Activated CD4-positive, alpha-beta T cell treated with anti-CD3 and anti-CD28 coated beads for 36 hours (primary cell): ENCODE measurements at regions of chr11 and their contacts with region 1.

Region 1: GRCh38 chr11:62880803-62881578 is at the start of gene SLC3A2:
- DNase-seq: peak; percentile 94
- ATAC-seq: peak; percentile 75
- H3K4me3 Mint-ChIP-seq: peak within 1 kb of the TSS; percentile 99
- H3K27ac Mint-ChIP-seq: peak within 1 kb of the TSS; percentile 100
- H3K4me1 Mint-ChIP-seq: peaks cover 44% of the 10 kb centered on the region
- H3K27me3 Mint-ChIP-seq: no peaks in the 10 kb centered on the region
- total RNA-seq, gene SLC3A2: 401 to 402 TPM

Region 2: GRCh38 chr11:61332797-61333549 is 1548.0 kb before region 1 on chr11 and contains the starts of genes DDB1 and TKFC:
- CTCF ChIA-PET with region 1: no interaction called
- POLR2A ChIA-PET with region 1: no interaction called
- intact Hi-C with region 1: no loop called
- DNase-seq: peak; percentile 99
- ATAC-seq: peak; percentile 94
- H3K4me3 Mint-ChIP-seq: peak within 1 kb of the TSS; percentile 97
- H3K27ac Mint-ChIP-seq: peak within 1 kb of the TSS; percentile 100
- H3K4me1 Mint-ChIP-seq: peaks cover 64% of the 10 kb centered on the region
- H3K27me3 Mint-ChIP-seq: no peaks in the 10 kb centered on the region
- total RNA-seq, gene DDB1: 258 to 268 TPM
- total RNA-seq, gene TKFC: 100 to 107 TPM

Region 3: GRCh38 chr11:62601394-62602140 is 279.4 kb before region 1 on chr11 and contains the start of gene MTA2:
- CTCF ChIA-PET with region 1: no interaction called
- POLR2A ChIA-PET with region 1: interaction called, 4 read pairs
- intact Hi-C with region 1: loop called in 1 of 2 experiments (anchors 1 kb)
- DNase-seq: peak; percentile 100
- ATAC-seq: peak; percentile 89
- H3K4me3 Mint-ChIP-seq: peak within 1 kb of the TSS; percentile 91
- H3K27ac Mint-ChIP-seq: peak within 1 kb of the TSS; percentile 96
- H3K4me1 Mint-ChIP-seq: peaks cover 51% of the 10 kb centered on the region
- H3K27me3 Mint-ChIP-seq: no peaks in the 10 kb centered on the region
- total RNA-seq, gene MTA2: 159 to 179 TPM

Region 4: DNA sequence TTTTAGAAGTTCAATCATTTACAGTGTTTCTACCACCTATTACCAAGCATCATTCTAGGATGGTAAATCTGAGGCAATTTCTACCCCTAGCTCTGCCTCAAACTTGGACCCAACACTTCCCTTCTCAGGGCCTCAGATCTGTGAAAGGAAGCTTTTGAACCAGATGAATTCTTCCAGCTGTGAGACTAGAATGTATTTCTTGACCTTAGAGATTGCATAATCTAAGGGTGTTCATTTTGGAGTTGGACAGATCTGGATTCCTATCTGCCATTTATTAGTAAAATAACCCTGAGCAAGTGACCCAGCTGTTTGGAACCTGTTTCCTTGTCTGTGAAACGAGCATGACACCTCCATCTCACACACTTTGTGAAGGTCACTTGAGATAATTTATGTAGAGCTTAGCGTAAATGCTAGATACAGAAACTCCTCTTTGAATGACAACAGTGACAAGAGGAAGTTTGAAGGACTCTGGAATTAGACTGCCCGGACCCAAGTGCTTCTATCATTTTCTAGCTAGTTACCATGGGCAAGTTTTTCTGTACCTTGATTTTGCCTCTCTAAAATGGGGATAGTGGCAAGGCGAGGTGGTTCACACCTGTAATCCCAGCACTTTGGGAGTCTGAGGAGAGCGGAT is 224.1 kb before region 1 on chr11:
- CTCF ChIA-PET with region 1: no interaction called
- POLR2A ChIA-PET with region 1: no interaction called
- intact Hi-C with region 1: no loop called
- DNase-seq: no peak
- ATAC-seq: no peak
- H3K4me3 Mint-ChIP-seq: no peak overlapping the region
- H3K27ac Mint-ChIP-seq: no peak overlapping the region
- H3K4me1 Mint-ChIP-seq: peaks cover 12% of the 10 kb centered on the region
- H3K27me3 Mint-ChIP-seq: no peaks in the 10 kb centered on the region

Region 5: GRCh38 chr11:62705880-62706849 is 174.8 kb before region 1 on chr11:
- CTCF ChIA-PET with region 1: no interaction called
- POLR2A ChIA-PET with region 1: no interaction called
- intact Hi-C with region 1: loop called in 1 of 2 experiments (anchors 1 kb)
- DNase-seq: peak; percentile 98
- ATAC-seq: peak; percentile 72
- H3K4me3 Mint-ChIP-seq: peak overlapping the region; percentile 82
- H3K27ac Mint-ChIP-seq: peak overlapping the region; percentile 51
- H3K4me1 Mint-ChIP-seq: peaks cover 46% of the 10 kb centered on the region
- H3K27me3 Mint-ChIP-seq: no peaks in the 10 kb centered on the region

Region 6: DNA sequence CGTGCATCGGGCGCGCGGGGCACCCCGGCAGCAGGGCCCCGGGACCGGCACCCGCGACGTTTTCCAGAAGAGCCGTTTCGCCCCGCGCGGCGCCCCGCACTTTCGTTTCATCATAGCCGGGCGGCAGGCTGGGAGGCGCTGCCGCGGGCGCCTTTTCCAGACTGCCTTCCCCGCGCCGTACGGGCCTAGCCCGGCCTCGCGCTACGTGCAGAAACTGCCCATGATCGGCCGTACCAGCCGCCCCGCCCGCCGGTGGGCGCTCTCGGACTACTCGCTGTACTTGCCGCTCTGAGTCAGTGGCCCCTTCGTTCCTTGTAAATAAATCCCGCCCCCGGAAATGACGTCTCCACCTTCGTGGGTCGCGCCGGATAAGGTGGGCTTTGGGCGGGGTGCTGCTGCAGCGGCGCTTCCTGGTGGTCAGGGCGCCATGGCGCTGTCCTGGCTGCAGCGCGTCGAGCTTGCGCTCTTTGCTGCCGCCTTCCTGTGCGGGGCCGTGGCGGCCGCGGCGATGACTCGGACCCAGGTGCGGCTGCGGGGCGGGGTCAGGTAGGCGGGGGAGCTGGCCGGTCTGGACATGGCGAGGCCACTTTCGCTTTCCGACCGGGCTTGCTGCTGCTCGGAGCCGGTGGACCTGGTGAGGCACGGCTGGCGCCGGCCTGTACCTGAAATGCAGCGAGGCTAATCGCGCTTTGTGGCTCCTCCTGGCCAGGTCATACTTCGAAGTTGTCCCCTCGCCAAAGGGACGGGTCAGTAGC is 93.8 kb before region 1 on chr11 and contains the start of gene TMEM179B:
- CTCF ChIA-PET with region 1: interaction called, 16 read pairs
- POLR2A ChIA-PET with region 1: interaction called, 7 read pairs
- intact Hi-C with region 1: loop called (anchors 1 kb)
- DNase-seq: peak; percentile 99
- ATAC-seq: peak; percentile 63
- H3K4me3 Mint-ChIP-seq: peak within 1 kb of the TSS; percentile 90
- H3K27ac Mint-ChIP-seq: peak within 1 kb of the TSS; percentile 95
- H3K4me1 Mint-ChIP-seq: peaks cover 42% of the 10 kb centered on the region
- H3K27me3 Mint-ChIP-seq: no peaks in the 10 kb centered on the region
- total RNA-seq, gene TMEM179B: 19.5 to 35.9 TPM

Region 7: GRCh38 chr11:62841361-62842184 is 39.4 kb before region 1 on chr11:
- CTCF ChIA-PET with region 1: interaction called, 6 read pairs
- POLR2A ChIA-PET with region 1: interaction called, 71 read pairs
- intact Hi-C with region 1: loop called (anchors 1 kb)
- DNase-seq: peak; percentile 86
- ATAC-seq: peak; percentile 67
- H3K4me3 Mint-ChIP-seq: no peak overlapping the region
- H3K27ac Mint-ChIP-seq: no peak overlapping the region
- H3K4me1 Mint-ChIP-seq: peaks cover 24% of the 10 kb centered on the region
- H3K27me3 Mint-ChIP-seq: no peaks in the 10 kb centered on the region

Region 8: DNA sequence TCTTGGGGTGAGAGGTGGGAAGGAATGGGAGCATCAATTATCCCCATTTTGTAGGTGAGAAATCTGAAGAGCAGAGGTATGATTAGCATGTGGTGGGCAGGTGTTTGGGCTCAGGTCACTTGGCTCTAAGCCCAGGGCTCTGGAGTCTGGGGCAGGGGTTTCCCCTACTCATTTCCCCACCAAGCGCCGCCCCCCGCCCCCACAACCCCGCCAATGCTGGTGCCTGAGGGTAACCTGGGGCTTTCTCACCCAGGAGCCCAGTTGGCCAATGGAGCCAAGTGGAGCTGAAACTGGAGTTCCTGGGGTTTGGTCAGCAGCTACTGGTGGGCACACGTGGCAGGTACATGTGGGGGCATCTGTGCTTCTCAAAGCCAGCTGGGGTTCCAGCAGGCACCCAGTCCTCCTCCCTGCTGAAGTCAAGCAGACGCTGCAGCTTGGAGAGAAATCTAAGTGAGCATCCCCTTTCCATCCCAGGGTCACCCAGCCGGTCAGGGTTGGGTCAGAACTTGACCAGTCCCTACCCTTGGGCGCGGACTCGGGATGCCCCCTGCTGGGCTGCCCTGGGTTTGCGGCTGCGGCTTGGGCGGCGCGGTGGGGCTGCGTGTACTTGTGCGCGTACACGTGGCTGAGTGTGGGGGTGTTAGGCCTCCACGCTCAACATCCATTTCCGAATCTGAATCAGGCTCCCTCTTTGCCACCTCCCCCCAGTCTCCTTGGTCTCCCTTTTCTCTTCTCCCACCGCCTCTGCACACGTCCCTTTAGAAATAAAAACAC is 41.9 kb after region 1 on chr11:
- CTCF ChIA-PET with region 1: no interaction called
- POLR2A ChIA-PET with region 1: no interaction called
- intact Hi-C with region 1: no loop called
- DNase-seq: peak; percentile 83
- ATAC-seq: peak; percentile 68
- H3K4me3 Mint-ChIP-seq: peak overlapping the region; percentile 59
- H3K27ac Mint-ChIP-seq: peak overlapping the region; percentile 7
- H3K4me1 Mint-ChIP-seq: peaks cover 32% of the 10 kb centered on the region
- H3K27me3 Mint-ChIP-seq: peaks cover 57% of the 10 kb centered on the region

Region 9: GRCh38 chr11:63478896-63479295 is 597.9 kb after region 1 on chr11:
- CTCF ChIA-PET with region 1: no interaction called
- POLR2A ChIA-PET with region 1: no interaction called
- intact Hi-C with region 1: no loop called
- DNase-seq: peak; percentile 60
- ATAC-seq: peak; percentile 69
- H3K4me3 Mint-ChIP-seq: no peak overlapping the region
- H3K27ac Mint-ChIP-seq: no peak overlapping the region
- H3K4me1 Mint-ChIP-seq: no peaks in the 10 kb centered on the region
- H3K27me3 Mint-ChIP-seq: peaks cover 4% of the 10 kb centered on the region

Region 10: GRCh38 chr11:63671322-63672155 is 790.5 kb after region 1 on chr11 and contains the start of gene ATL3:
- CTCF ChIA-PET with region 1: no interaction called
- POLR2A ChIA-PET with region 1: no interaction called
- intact Hi-C with region 1: loop called in 1 of 2 experiments (anchors 2 kb)
- DNase-seq: peak; percentile 96
- ATAC-seq: peak; percentile 86
- H3K4me3 Mint-ChIP-seq: peak within 1 kb of the TSS; percentile 85
- H3K27ac Mint-ChIP-seq: peak within 1 kb of the TSS; percentile 90
- H3K4me1 Mint-ChIP-seq: peaks cover 45% of the 10 kb centered on the region
- H3K27me3 Mint-ChIP-seq: no peaks in the 10 kb centered on the region
- total RNA-seq, gene ATL3: 18.9 to 25.7 TPM

Region 11: DNA sequence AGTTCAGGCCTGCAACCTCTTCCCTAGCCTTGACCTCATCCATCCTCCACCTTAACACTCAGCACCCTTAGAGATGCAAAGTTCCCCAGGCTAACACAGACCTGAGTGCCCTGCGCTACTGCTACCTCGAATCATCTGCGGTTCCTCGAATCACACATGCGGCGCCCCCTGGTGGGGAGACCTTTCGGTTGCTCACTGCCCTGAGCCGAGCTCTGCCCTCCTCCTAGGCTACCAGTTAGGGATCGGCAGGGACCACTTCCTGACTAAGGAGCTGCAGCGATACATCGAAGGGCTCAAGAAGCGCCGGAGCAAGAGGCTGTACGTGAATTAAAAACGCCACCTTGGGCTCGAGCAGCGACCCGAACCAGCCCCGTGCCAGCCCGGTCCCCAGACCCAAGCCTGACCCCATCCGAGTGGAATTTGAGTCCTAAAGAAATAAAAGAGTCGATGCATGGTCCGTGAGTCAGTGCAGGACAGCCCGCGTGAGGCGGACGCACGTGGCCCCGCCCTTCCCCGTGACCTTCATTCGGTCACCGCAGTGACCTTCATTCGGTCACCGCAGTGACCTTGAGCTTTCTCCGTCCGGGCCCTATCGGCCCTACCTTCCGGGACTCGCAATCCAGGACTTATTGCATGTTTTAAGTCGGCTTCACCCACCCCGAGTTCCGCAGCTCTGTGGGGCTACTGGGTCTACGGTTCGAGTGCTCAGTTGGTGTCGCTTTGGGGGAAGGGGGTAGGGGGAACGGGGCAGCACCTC is 1423.5 kb after region 1 on chr11:
- CTCF ChIA-PET with region 1: no interaction called
- POLR2A ChIA-PET with region 1: no interaction called
- intact Hi-C with region 1: loop called in 1 of 2 experiments (anchors 10 kb)
- DNase-seq: peak; percentile 99
- ATAC-seq: peak; percentile 49
- H3K4me3 Mint-ChIP-seq: peak overlapping the region; percentile 100
- H3K27ac Mint-ChIP-seq: peak overlapping the region; percentile 95
- H3K4me1 Mint-ChIP-seq: peaks cover 34% of the 10 kb centered on the region
- H3K27me3 Mint-ChIP-seq: peaks cover 14% of the 10 kb centered on the region